Breast epithelium (tissue), 4 donors: ENCODE measurements at regions of chr4 and their contacts with region 1.

Region 1: DNA sequence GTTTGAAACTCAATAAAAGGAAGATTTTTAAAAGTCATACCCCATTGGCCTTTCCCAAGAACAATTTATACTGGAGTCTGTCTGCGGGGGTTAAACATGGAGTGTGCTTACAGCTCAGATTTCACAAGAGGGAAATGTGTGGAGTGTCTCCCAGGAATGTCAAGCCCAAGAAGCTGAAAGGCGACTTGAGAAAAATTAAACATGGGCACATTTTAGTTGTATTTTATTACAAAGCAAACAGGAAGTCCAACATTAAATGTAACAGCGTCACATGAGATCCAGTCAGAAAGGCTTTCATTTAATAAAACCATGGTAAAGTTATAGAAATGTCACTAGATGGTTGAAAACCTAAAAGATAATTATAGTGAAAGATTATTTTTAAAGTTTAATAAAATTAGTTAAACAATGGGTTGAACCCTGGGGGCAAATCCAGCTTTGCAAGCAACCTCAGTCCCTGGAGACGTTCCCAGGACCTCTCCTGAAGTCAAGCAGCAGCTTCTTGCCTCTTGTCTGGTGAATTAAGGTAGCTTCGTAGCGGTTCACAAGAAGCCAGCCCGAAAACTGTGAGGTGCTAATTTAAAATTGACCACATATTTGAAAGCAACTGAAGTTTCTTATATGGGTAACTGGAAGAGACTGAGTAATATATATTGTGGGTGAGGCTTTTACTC is 168.4 kb upstream of the EDNRA start:
- DNase-seq: no peak
- H3K4me3 ChIP-seq: no peak overlapping the region
- H3K27ac ChIP-seq: peak overlapping the region in 1 of 2 donors; percentile 16
- H3K4me1 ChIP-seq: no peaks in the 10 kb centered on the region
- H3K27me3 ChIP-seq: no peaks in the 10 kb centered on the region
- CTCF ChIP-seq: no peak
- POLR2A ChIP-seq: no peak

Region 2: DNA sequence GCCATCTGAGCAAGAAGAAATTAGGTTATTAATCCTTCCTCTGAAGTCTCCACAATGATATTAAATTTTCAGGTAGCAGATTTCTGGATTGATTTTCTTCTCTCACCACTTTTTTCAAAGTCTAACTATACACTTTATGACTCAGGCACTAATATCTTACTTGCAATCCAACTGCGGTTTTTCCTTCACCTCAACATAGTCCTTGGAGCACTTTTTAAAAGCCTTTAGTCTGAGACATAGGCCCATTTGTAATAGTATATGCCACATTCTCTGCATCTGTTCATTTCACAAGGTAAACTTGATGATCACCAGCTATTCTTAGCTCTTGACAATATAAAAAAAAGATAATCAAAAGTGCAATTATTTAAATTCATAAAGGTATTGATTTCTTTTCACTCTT is 112.5 kb after region 1 on chr4:
- intact Hi-C with region 1: no loop called
- DNase-seq: no peak
- H3K4me3 ChIP-seq: no peak overlapping the region
- H3K27ac ChIP-seq: no peak overlapping the region
- H3K4me1 ChIP-seq: no peaks in the 10 kb centered on the region
- H3K27me3 ChIP-seq: no peaks in the 10 kb centered on the region
- CTCF ChIP-seq: no peak
- POLR2A ChIP-seq: no peak

Region 3: GRCh38 chr4:148749403-148749802 is 1436.9 kb after region 1 on chr4:
- intact Hi-C with region 1: loop called (anchors 5 kb)
- DNase-seq: no peak
- H3K4me3 ChIP-seq: no peak overlapping the region
- H3K27ac ChIP-seq: no peak overlapping the region
- H3K4me1 ChIP-seq: no peaks in the 10 kb centered on the region
- H3K27me3 ChIP-seq: no peaks in the 10 kb centered on the region
- CTCF ChIP-seq: no peak
- POLR2A ChIP-seq: no peak